GM12878 (cell line): ENCODE measurements at regions of chr22 and their contacts with region 1.

Region 1: DNA sequence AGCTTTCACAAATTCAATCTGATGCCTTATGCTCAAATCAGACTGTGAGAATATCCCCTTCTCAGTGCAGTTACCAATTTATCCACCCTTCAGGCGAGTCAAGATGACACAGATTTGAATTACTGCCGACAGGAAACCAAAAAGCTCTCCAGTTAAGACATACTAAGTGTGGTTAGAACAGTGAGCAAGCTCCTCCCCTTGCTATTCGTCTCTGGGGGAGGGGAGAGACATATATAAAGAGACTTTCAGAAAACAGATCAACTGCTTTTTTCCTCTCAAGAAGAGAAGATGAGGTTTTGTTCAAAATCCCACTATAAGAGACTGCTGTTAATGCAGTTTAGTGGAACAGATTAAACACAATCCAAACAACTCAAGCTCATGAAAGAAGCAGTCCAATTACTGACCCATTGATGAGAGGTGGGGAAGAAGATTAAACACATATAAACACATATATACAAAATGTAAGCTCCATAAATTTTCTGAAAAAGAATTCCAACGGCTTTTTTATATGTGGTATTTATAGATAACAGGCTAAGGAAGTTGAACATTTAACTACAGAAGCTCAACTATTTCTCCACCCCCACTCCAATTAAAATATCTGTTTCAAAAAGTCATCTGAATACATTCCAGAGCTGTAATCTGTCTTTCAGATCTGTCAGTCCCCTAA is 102.7 kb downstream of the MRTFA start:
- DNase-seq: peak; percentile 74
- ATAC-seq: peak; percentile 88
- H3K4me3 ChIP-seq: peak overlapping the region; percentile 76
- H3K27ac ChIP-seq: peak overlapping the region; percentile 75
- H3K4me1 ChIP-seq: peaks cover 21% of the 10 kb centered on the region
- H3K27me3 ChIP-seq: no peaks in the 10 kb centered on the region
- CTCF ChIP-seq: no peak
- EP300 ChIP-seq: no peak
- POLR2A ChIP-seq: no peak
- RAD21 ChIP-seq: peak; percentile 15; the same call in 1 of the 2 replicates

Region 2: DNA sequence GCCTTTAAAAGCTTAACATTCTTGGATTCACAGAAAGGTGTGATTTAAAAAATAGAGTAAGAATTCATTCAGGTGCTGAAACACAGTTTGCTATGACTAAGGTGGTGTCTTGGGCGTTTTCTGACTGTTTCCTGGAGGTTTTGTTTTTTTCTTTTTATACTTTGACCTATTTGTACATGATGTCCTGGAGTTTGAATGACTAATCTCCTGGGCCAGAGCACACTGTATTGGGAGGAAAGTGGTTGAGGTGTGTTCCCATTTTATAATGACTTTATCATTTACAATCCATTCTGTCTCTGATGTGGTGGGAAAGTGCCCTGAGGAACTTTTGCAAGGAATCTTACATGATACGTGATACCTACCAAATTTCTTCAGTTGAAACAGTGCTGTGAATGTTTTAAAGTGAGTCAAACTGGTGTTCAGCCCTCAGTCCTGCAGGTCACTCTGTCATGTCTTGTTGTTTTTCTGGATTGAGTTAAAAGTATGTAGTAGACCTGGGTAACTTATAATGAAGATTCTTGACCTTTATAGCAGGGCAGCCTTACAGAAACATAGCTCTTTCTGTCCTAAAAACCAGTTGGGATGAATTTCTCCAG is 275.3 kb before region 1 on chr22:
- CTCF ChIA-PET with region 1: no interaction called
- POLR2A ChIA-PET with region 1: no interaction called
- RAD21 ChIA-PET with region 1: no interaction called
- SMC1A ChIA-PET with region 1: no interaction called
- in situ Hi-C with region 1: no loop called
- intact Hi-C with region 1: no loop called
- DNase-seq: no peak
- ATAC-seq: no peak
- H3K4me3 ChIP-seq: no peak overlapping the region
- H3K27ac ChIP-seq: no peak overlapping the region
- H3K4me1 ChIP-seq: no peaks in the 10 kb centered on the region
- H3K27me3 ChIP-seq: no peaks in the 10 kb centered on the region
- CTCF ChIP-seq: no peak
- EP300 ChIP-seq: no peak
- POLR2A ChIP-seq: no peak
- RAD21 ChIP-seq: no peak

Region 3: DNA sequence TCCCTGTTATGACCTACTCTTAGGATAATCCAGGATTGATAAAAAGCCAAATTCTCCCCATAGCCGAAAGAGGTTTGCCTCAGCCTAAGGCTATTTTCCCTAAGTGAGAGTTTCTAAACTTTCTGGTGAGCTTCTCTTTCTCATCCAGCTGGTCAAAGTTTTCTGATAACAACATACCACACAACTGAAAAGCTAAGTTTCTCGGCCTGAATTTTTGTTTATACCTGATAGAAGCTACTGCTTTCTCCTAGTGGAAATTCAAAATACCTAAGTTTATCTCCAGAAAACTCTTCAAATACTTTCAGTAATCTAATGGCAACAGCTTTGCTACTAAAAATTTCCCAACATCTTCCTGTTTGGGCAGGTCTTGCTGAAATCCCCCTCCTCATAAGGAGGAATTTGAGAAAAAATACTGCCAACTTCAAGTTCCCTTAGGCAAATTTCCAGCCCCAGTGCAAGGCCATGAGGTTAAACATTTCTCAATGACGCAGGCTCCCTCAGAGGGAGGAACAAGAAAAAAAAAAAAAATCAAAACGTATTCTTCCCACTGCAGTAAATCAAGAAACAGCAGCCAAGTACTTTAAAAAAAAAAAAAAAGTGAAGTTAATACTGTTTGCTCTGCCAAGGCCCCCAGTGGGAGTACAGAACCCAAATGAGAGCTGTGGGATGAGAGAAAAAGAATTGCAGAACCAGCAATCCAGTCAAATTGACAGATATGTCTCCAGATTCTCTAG is 24.3 kb before region 1 on chr22:
- CTCF ChIA-PET with region 1: interaction called, 7 read pairs
- POLR2A ChIA-PET with region 1: no interaction called
- RAD21 ChIA-PET with region 1: interaction called, 3 read pairs
- SMC1A ChIA-PET with region 1: interaction called, 20 read pairs
- in situ Hi-C with region 1: no loop called
- intact Hi-C with region 1: no loop called
- DNase-seq: no peak
- ATAC-seq: peak; percentile 73
- H3K4me3 ChIP-seq: no peak overlapping the region
- H3K27ac ChIP-seq: peak overlapping the region; percentile 10
- H3K4me1 ChIP-seq: peaks cover 10% of the 10 kb centered on the region
- H3K27me3 ChIP-seq: no peaks in the 10 kb centered on the region
- CTCF ChIP-seq: no peak
- EP300 ChIP-seq: no peak
- POLR2A ChIP-seq: no peak
- RAD21 ChIP-seq: no peak

Region 4: GRCh38 chr22:40583053-40583741 is 49.4 kb after region 1 on chr22:
- CTCF ChIA-PET with region 1: interaction called, 8 read pairs
- POLR2A ChIA-PET with region 1: interaction called, 22 read pairs
- RAD21 ChIA-PET with region 1: interaction called, 13 read pairs
- SMC1A ChIA-PET with region 1: interaction called, 130 read pairs
- in situ Hi-C with region 1: no loop called
- intact Hi-C with region 1: no loop called
- DNase-seq: no peak
- ATAC-seq: peak; percentile 84
- H3K4me3 ChIP-seq: peak overlapping the region; percentile 12; the same call in 1 of the 2 replicates
- H3K27ac ChIP-seq: peak overlapping the region; percentile 28
- H3K4me1 ChIP-seq: peaks cover 36% of the 10 kb centered on the region
- H3K27me3 ChIP-seq: no peaks in the 10 kb centered on the region
- CTCF ChIP-seq: no peak
- EP300 ChIP-seq: no peak; a peak in 1 of 4 replicates
- POLR2A ChIP-seq: no peak
- RAD21 ChIP-seq: no peak

Region 5: DNA sequence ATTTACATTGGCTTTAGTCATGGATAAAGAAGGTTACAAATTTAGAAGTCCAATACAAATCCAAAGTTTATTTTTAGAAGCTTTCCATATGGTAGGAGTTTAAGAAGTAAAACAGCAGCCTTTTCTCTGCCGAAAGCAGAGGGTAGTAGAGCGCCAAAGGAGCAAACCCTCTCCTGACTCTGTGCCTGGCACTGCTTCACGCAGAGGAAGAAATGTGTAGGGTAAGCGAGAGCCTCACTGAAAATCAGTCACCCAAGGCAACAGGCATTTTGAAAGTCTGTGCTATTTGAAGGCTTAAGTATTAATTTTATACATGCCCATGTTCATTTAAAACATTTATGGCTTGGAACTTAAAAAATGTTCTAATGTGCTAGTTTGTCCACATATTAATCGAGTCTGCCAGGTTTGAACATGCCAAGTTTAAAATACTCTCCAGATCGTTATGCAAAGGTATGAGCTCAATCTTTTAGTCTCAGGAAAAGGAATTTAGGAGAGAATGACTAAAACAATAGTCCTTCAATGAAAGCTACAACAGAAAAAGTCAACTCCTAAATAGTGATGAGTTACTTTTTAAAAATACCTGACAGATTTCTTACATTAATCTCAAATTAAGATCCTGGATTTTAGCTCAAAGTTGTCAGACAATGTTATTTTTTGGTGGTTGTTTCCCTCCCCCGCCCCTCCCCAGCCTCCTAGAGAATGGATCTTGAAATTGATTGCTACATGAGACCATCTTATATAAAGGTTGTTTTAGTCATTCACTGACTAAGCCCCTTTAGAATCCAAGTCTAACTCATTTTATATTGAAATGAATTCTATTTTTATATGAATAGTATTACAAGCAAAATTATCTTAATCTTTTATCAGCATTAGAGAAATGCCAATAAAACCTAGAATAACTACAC is 63.9 kb after region 1 on chr22:
- CTCF ChIA-PET with region 1: interaction called, 15 read pairs
- POLR2A ChIA-PET with region 1: interaction called, 8 read pairs
- RAD21 ChIA-PET with region 1: interaction called, 34 read pairs
- SMC1A ChIA-PET with region 1: interaction called, 130 read pairs
- in situ Hi-C with region 1: no loop called
- intact Hi-C with region 1: loop called (anchors 5 kb)
- DNase-seq: no peak
- ATAC-seq: no peak
- H3K4me3 ChIP-seq: no peak overlapping the region
- H3K27ac ChIP-seq: no peak overlapping the region; the same call in 1 of the 2 replicates
- H3K4me1 ChIP-seq: peaks cover 54% of the 10 kb centered on the region
- H3K27me3 ChIP-seq: no peaks in the 10 kb centered on the region
- CTCF ChIP-seq: 0 out of 6 replicates have a peak, but pooled peaks of 1 of the 3 experiments have one; percentile 0
- EP300 ChIP-seq: no peak
- POLR2A ChIP-seq: no peak
- RAD21 ChIP-seq: no peak

Region 6: GRCh38 chr22:40636380-40637182 is 102.7 kb after region 1 on chr22 and contains the start of gene MRTFA:
- CTCF ChIA-PET with region 1: interaction called, 339 read pairs
- POLR2A ChIA-PET with region 1: interaction called, 26 read pairs
- RAD21 ChIA-PET with region 1: interaction called, 137 read pairs
- SMC1A ChIA-PET with region 1: interaction called, 248 read pairs
- in situ Hi-C with region 1: loop called (anchors 5 kb)
- intact Hi-C with region 1: loop called (anchors 2 kb)
- DNase-seq: peak; percentile 99
- ATAC-seq: peak; percentile 95
- H3K4me3 ChIP-seq: peak within 1 kb of the TSS; percentile 85
- H3K27ac ChIP-seq: peak within 1 kb of the TSS; percentile 79
- H3K4me1 ChIP-seq: peaks cover 6% of the 10 kb centered on the region
- H3K27me3 ChIP-seq: no peaks in the 10 kb centered on the region
- CTCF ChIP-seq: 0 out of 6 replicates have a peak, but pooled peaks of 1 of the 3 experiments have one; percentile 0
- EP300 ChIP-seq: no peak
- POLR2A ChIP-seq: peak; percentile 99
- RAD21 ChIP-seq: no peak
- polyA plus RNA-seq, gene MRTFA: 2.0 to 2.6 TPM

Region 7: GRCh38 chr22:40651563-40652501 is 118.0 kb after region 1 on chr22:
- CTCF ChIA-PET with region 1: interaction called, 339 read pairs
- POLR2A ChIA-PET with region 1: interaction called, 11 read pairs
- RAD21 ChIA-PET with region 1: interaction called, 137 read pairs
- SMC1A ChIA-PET with region 1: interaction called, 248 read pairs
- in situ Hi-C with region 1: no loop called
- intact Hi-C with region 1: no loop called
- DNase-seq: no peak
- ATAC-seq: peak; percentile 85
- H3K4me3 ChIP-seq: peak overlapping the region; percentile 49; the same call in 1 of the 2 replicates
- H3K27ac ChIP-seq: peak overlapping the region; percentile 85
- H3K4me1 ChIP-seq: peaks cover 8% of the 10 kb centered on the region
- H3K27me3 ChIP-seq: no peaks in the 10 kb centered on the region
- CTCF ChIP-seq: no peak
- EP300 ChIP-seq: no peak
- POLR2A ChIP-seq: peak; percentile 91
- RAD21 ChIP-seq: no peak